ENCODE measurements at regions of chr1 and their contacts with region 1.

Region 1: DNA sequence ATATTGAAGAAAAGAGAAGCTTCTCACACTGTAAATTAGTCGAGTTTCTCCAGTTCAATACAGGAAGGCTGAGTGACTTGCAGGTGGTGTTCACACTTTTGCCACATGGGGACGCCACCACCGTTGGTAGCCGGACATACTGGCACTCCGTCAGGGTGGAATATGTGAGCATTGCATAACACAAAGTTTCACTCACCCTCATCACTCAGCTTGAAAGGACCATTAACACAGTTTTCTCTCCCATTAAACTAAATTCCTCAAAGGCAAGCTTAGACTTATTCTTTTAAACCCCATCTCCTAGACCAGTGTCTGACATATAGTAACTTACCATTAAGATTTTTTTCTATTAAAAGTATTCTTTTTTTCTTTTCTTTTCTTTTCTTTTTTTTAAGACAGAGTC is 105.3 kb upstream of the SERBP1 start:
- DNase-seq: peak; percentile 49
- H3K4me3 ChIP-seq: no peak overlapping the region
- CTCF ChIP-seq: peak; percentile 95

Region 2: DNA sequence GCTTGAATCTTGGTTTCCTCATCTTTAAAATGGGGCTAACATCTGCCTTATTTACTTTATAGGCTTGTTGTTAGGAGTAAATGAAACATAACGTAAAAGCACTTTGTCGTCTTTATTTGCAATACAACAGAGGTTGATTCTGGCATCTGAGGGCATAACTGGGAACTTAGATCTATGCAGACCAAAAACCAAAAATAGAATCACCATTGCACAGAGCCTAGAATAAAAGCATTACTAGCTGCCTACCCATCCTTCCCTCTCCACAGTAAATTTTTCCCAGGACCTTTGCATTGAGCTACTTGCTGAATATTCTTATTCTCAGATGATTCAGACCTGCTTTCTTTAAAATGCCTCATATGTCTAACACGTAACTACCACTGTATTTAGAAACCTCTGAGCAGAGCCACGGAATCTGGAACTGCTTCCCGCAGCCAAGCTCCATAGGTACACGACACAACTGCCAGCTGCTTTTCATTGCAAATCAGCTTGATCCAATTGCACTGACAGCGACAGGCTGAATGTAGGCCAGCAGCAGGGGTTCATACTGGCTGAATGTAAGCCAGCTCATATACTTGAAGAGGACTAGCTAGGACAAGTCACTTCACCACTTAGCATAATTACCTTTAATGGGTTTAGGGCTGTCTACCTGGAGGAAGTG is 72.0 kb before region 1 on chr1:
- CTCF ChIA-PET with region 1: no interaction called
- POLR2A ChIA-PET with region 1: no interaction called
- DNase-seq: no peak
- H3K4me3 ChIP-seq: no peak overlapping the region
- CTCF ChIP-seq: no peak

Region 3: GRCh38 chr1:67524143-67525052 is 11.1 kb before region 1 on chr1:
- CTCF ChIA-PET with region 1: interaction called, 13 read pairs
- POLR2A ChIA-PET with region 1: no interaction called
- DNase-seq: no peak
- H3K4me3 ChIP-seq: no peak overlapping the region
- CTCF ChIP-seq: no peak

Region 4: GRCh38 chr1:67674260-67675011 is 139.0 kb after region 1 on chr1:
- CTCF ChIA-PET with region 1: interaction called, 10 read pairs
- POLR2A ChIA-PET with region 1: no interaction called
- DNase-seq: no peak
- H3K4me3 ChIP-seq: no peak overlapping the region
- CTCF ChIP-seq: no peak

Region 5: DNA sequence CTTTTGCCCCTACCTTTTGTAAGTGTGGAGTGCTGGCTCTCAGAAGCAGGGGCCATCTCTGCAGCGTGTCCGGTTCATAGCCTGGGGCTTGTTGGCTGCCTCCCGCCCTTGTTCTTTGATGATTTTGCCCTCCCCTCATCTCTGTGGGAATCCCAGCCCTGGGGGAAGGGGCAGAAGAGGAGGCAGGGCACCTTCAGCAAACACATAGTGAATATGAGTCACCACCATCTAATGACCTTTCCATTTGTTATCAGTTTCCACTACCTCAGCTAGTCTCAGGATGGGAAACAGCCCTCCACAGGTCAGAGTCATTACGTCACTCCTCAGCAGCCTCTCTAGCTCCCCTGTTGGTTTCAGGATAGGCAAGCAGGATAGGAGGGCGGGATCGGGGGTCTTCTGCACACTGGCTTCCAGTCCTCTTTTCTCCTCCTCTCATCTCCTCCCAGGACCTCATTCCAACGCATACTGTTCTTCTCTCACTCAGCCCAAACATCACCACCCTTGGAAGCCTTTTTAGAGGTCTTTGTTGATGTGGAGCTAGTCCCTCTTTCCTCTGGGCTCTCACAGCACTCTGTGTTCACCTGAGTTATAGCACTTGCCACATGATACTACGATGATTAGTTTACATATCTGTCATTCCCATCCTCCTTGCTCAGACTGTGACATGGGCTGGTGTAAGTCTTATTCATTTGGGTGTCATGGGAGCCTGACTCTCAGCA is 165.4 kb after region 1 on chr1:
- CTCF ChIA-PET with region 1: interaction called, 23 read pairs
- POLR2A ChIA-PET with region 1: no interaction called
- DNase-seq: no peak
- H3K4me3 ChIP-seq: no peak overlapping the region
- CTCF ChIP-seq: no peak

Region 6: GRCh38 chr1:67748630-67749029 is 213.2 kb after region 1 on chr1:
- CTCF ChIA-PET with region 1: interaction called, 653 read pairs
- POLR2A ChIA-PET with region 1: no interaction called
- DNase-seq: no peak
- H3K4me3 ChIP-seq: no peak overlapping the region; the same call in 1 of the 2 replicates
- CTCF ChIP-seq: no peak

Region 7: DNA sequence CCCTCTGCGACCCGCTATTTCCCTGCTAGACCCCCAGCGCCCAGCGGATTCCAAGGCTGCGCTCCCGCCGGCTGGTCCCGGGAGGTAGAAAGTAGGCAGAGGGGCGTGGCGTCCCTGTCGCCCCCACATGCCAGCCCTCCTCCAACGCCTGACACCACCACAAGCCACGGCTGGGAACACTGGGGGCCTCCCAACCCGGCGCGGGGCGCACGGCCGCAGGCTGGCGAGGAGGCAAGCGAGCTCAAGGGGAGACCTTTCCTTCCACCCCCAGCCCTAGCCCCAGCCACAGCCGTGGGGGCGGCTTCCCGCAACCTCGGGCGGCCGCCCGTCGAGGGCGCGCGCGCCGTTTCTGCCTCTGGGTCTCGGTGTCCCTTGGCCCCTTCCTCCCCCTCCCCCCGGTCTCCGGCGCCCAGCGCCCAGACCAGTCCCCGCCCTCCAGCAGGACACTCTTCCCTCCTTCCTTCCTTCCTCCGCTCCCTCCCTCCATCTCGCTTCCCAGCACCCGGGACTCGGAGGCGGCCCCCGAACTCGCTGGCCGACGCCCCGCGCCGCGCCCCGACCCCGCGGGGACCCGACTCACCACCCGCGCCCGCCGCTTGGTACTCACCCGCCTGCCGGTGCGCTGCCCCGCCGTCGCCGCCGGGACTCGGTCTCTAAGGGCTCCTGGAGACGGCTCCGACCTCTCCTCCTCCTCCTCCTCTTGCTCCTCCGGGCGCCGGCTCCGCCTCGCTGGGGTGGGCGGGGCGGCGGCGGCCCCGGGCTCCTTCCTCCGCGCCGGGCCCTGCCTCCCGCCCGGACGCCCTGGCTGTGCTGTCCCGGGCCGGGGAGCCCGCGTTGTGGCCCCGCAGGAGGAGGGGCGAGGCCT is 297.5 kb after region 1 on chr1 and contains the start of gene GNG12:
- CTCF ChIA-PET with region 1: interaction called, 11 read pairs
- POLR2A ChIA-PET with region 1: no interaction called
- DNase-seq: no peak
- H3K4me3 ChIP-seq: peak within 1 kb of the TSS; percentile 80
- CTCF ChIP-seq: no peak